Activated CD4-positive, alpha-beta memory T cell treated with anti-CD3 and anti-CD28 coated beads for 36 hours (primary cell): ENCODE measurements at regions of chr9 and their contacts with region 1.

Region 1: GRCh38 chr9:72364679-72365524 is at the start of gene ZFAND5:
- DNase-seq: peak; percentile 95
- H3K4me3 Mint-ChIP-seq: peak within 1 kb of the TSS; percentile 84
- H3K27ac Mint-ChIP-seq: peak within 1 kb of the TSS; percentile 96
- H3K4me1 Mint-ChIP-seq: peaks cover 35% of the 10 kb centered on the region
- H3K27me3 Mint-ChIP-seq: no peaks in the 10 kb centered on the region
- total RNA-seq, gene ZFAND5: 92.4 to 93.8 TPM

Region 2: GRCh38 chr9:70413798-70414775 is 1950.8 kb before region 1 on chr9 and contains the start of gene KLF9:
- CTCF ChIA-PET with region 1: no interaction called
- POLR2A ChIA-PET with region 1: interaction called, 3 read pairs
- intact Hi-C with region 1: loop called (anchors 10 kb)
- DNase-seq: peak; percentile 96
- H3K4me3 Mint-ChIP-seq: peak within 1 kb of the TSS; percentile 97
- H3K27ac Mint-ChIP-seq: peak within 1 kb of the TSS; percentile 100
- H3K4me1 Mint-ChIP-seq: peaks cover 37% of the 10 kb centered on the region
- H3K27me3 Mint-ChIP-seq: peaks cover 2% of the 10 kb centered on the region
- total RNA-seq, gene KLF9: 23.7 to 24.5 TPM

Region 3: GRCh38 chr9:72292256-72292682 is 72.6 kb before region 1 on chr9:
- CTCF ChIA-PET with region 1: interaction called, 7 read pairs
- POLR2A ChIA-PET with region 1: no interaction called
- intact Hi-C with region 1: loop called (anchors 5 kb)
- DNase-seq: no peak
- H3K4me3 Mint-ChIP-seq: no peak overlapping the region
- H3K27ac Mint-ChIP-seq: no peak overlapping the region
- H3K4me1 Mint-ChIP-seq: no peaks in the 10 kb centered on the region
- H3K27me3 Mint-ChIP-seq: peaks cover 7% of the 10 kb centered on the region

Region 4: DNA sequence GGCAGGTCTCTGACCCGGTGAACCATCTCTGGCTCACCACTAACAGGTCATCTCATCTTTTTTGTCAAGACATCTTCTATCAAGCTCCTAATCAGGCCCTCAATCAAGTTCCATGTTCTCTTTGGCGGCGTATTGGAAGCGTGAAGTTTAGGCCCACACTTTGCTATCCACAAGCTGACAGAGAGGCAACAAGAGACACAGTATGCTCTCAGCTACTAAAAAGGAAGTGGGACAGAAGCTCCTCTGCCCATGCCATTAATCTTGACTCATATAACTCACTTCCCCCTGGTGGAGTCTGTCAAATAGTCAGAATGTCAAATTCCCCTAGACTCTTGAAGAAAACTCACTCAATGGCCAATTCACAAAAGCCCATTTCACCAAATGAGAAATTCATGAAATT is 79.0 kb after region 1 on chr9:
- CTCF ChIA-PET with region 1: interaction called, 6 read pairs
- POLR2A ChIA-PET with region 1: interaction called, 6 read pairs
- intact Hi-C with region 1: loop called (anchors 1 kb)
- DNase-seq: peak; percentile 28
- H3K4me3 Mint-ChIP-seq: peak overlapping the region; percentile 25
- H3K27ac Mint-ChIP-seq: peak overlapping the region; percentile 83
- H3K4me1 Mint-ChIP-seq: peaks cover 28% of the 10 kb centered on the region
- H3K27me3 Mint-ChIP-seq: no peaks in the 10 kb centered on the region

Region 5: DNA sequence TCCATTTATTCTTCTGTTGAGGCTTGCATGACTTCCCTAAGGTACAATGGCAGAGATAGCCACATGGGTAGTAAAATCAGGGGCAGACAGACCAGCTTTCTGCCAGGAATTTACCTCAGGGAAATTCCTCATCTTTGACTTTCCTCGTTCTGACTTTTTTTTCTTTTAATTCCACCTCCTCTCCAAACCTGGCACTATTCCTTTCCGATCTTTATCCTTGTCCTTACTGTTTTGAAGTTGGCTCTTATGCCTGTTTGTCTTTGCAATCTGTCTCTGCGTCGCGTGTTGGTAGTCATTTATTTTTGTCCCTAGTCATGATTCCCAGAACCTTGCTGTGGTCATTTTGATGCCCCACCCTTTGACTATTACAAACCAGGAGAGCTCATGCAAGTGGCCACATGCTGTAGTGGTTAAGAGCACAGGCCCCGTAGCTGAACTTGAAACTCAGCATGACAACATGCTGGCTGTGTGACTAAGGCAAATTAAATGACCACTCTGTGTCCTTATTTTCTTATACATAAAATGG is 175.5 kb after region 1 on chr9:
- CTCF ChIA-PET with region 1: no interaction called
- POLR2A ChIA-PET with region 1: interaction called, 4 read pairs
- intact Hi-C with region 1: loop called (anchors 5 kb)
- DNase-seq: no peak
- H3K4me3 Mint-ChIP-seq: no peak overlapping the region
- H3K27ac Mint-ChIP-seq: no peak overlapping the region
- H3K4me1 Mint-ChIP-seq: peaks cover 34% of the 10 kb centered on the region
- H3K27me3 Mint-ChIP-seq: no peaks in the 10 kb centered on the region

Region 6: DNA sequence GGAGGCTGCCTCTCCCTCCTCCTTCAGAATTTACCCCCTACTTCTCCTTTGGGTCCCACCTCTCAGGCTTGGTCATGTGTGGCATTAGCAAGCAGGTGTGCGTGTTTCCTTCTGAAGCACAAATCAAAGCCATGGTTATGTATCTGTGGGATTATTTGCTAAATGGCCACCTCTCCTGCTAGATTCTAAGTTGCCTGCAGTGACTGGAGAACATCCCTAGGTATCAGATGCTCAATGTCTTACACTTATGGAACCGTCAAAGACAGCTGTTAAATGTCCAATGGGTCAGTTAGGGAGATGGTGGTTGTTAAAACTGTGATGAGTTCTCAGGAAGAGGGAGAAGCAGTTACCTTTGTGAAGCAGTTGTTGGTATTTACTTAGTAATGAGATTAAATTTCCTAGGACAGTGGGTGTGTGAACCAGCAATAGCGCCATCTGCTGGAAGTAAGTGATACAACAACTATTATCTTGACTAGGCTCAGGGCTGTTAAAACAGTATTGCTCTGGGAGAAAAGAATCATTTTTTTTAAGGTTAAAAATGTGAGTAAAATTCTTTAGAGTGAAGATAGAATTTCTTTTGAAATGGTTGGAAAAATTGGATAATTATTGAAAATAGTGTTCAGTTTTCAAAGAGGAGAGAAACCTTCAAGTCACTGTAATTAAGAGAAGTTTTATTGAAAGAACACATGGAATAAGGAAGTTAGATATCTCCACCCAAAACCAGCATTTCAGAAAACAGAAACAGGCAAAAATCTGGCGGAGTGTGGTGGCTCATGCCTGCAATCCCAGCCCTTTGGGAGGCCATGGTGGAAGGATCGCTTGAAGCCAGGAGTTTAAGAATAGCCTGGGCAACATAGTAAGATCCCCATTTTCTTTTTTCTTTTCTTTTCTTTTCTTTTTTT is 227.9 kb after region 1 on chr9:
- CTCF ChIA-PET with region 1: interaction called, 11 read pairs
- POLR2A ChIA-PET with region 1: interaction called, 4 read pairs
- intact Hi-C with region 1: loop called (anchors 1 kb)
- DNase-seq: peak; percentile 30
- H3K4me3 Mint-ChIP-seq: no peak overlapping the region
- H3K27ac Mint-ChIP-seq: no peak overlapping the region
- H3K4me1 Mint-ChIP-seq: peaks cover 28% of the 10 kb centered on the region
- H3K27me3 Mint-ChIP-seq: no peaks in the 10 kb centered on the region